Lower lobe of right lung (tissue), 2 donors: ENCODE measurements at regions of chr6 and their contacts with region 1.

Region 1: DNA sequence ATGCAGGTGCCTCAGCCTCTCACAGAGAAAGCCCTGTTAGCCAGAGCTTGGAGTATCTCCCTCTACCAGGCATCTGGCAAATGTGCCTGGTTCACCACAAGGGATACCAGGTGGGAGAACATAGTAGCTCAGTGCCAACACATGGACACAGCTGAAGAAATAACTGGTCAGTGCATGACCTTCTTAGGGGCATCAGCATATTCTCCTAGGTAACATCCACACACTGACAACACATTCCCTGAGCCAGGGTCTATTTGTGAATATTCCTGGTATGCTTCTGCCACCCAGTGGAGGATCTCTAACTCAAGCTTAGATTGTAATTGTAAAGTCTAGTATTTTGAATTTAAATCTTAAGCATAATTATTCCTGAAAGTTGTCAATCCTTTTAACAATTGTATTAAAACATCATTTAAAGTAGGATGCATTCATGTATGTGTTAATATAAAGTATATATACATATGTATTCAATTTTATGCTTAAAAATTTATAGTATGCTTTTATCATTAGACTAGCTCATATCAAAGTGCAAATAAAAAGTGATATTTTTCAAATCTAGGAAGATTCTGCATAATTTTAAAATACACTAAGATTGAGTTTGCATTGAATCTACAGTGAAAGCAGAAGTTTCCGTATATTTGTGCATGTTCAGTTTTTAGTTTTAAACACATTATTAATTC is 45.3 kb upstream of the COL21A1 start:
- DNase-seq: no peak
- ATAC-seq: peak; percentile 67 to 76
- H3K4me3 ChIP-seq: no peak overlapping the region
- H3K27ac ChIP-seq: no peak overlapping the region
- H3K4me1 ChIP-seq: no peaks in the 10 kb centered on the region
- H3K27me3 ChIP-seq: no peaks in the 10 kb centered on the region
- CTCF ChIP-seq: peak; percentile 61

Region 2: GRCh38 chr6:55980627-55981211 is 311.9 kb before region 1 on chr6:
- intact Hi-C with region 1: loop called (anchors 5 kb)
- DNase-seq: no peak
- ATAC-seq: no peak
- H3K4me3 ChIP-seq: no peak overlapping the region
- H3K27ac ChIP-seq: no peak overlapping the region
- H3K4me1 ChIP-seq: no peaks in the 10 kb centered on the region
- H3K27me3 ChIP-seq: no peaks in the 10 kb centered on the region
- CTCF ChIP-seq: peak; percentile 70